Psoas muscle (tissue), 8 donors: ENCODE measurements at regions of chr11 and their contacts with region 1.

Region 1: GRCh38 chr11:73661035-73661628 is 14.8 kb downstream of the PLEKHB1 start:
- DNase-seq: peak; percentile 90 to 95
- ATAC-seq: peak; percentile 94 to 98 (median 97)
- H3K4me3 ChIP-seq: peak overlapping the region; percentile 59
- H3K27ac ChIP-seq: no peak overlapping the region
- H3K4me1 ChIP-seq: peaks cover 17% of the 10 kb centered on the region
- H3K27me3 ChIP-seq: no peaks in the 10 kb centered on the region
- CTCF ChIP-seq: peak; percentile 99

Region 2: DNA sequence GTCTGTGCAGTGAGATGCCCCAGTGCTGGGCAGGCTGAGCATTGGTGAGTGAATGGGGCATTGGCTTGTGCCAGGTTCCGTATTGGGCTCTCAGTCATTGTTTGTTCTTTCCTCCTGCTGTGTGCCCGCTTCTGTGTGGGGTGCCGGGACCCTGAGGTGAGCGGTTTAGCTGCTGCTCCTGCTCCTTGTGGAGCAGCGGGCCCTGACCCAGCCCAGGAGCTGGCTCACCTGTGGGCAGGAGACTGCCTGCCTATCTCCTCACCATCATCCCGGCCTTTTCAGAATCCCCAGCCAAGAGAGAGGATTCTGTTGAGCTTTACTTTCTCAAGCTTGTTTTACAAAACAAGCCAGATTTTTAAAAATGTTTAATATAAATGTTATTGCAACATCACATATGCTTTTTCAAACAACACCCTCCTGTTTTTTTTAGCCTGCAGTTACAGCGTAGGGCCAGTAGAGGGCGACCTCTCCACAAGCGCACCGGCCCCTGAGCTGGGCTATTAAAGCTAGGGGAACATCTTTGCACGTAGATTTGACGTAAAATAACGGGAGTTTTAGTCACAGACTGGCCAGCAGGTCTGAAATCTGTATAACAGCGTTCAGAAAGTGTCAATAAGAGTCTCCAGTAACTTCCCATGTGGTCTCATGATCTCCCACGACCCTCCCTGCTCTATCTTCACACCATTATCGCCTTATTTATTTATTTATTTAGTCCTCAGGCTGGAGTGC is 310.1 kb before region 1 on chr11:
- intact Hi-C with region 1: loop called in 1 of 2 experiments (anchors 2 kb)
- DNase-seq: no peak
- ATAC-seq: peak; percentile 56 to 86 (median 75)
- H3K4me3 ChIP-seq: no peak overlapping the region
- H3K27ac ChIP-seq: no peak overlapping the region
- H3K4me1 ChIP-seq: peaks cover 4% of the 10 kb centered on the region
- H3K27me3 ChIP-seq: no peaks in the 10 kb centered on the region
- CTCF ChIP-seq: peak; percentile 99

Region 3: GRCh38 chr11:73404048-73404447 is 257.1 kb before region 1 on chr11:
- intact Hi-C with region 1: loop called (anchors 2 to 5 kb)
- DNase-seq: peak; percentile 65 to 81
- ATAC-seq: peak; percentile 78 to 83 (median 82)
- H3K4me3 ChIP-seq: no peak overlapping the region
- H3K27ac ChIP-seq: peak overlapping the region; percentile 13
- H3K4me1 ChIP-seq: peaks cover 6% of the 10 kb centered on the region
- H3K27me3 ChIP-seq: no peaks in the 10 kb centered on the region
- CTCF ChIP-seq: peak; percentile 70

Region 4: DNA sequence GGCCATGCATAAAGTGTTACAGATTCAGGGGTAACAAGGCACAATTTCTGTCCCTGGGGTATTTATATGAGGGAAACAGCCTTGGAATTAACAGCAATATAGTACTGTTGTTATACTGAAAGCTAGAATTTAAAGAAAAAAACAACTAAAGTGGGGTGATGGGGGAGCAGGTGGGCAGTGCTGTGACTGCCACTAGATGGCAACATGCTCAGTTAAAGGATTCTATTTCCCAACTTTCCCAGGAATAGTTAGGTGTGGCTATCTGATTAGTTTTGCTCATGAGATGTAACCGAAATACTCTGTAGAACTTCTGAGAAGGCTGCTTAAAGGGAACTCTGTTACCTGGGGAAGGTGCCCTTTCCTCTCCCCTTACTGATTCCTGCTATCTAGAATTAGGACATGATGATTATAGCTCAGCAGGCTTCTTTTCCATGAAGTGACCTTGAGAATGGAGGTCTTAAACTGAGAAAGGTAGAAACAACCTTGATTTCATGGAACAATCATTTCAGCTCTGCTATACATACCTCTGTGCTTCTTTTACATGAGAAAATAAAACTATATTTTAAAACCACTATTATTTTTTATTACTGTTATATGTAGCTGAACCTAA is 182.3 kb before region 1 on chr11:
- intact Hi-C with region 1: loop called in 1 of 2 experiments (anchors 5 kb)
- DNase-seq: no peak
- ATAC-seq: peak in 3 of 4 donors; percentile 74 to 86 (median 84)
- H3K4me3 ChIP-seq: no peak overlapping the region
- H3K27ac ChIP-seq: no peak overlapping the region
- H3K4me1 ChIP-seq: peaks cover 18% of the 10 kb centered on the region
- H3K27me3 ChIP-seq: no peaks in the 10 kb centered on the region
- CTCF ChIP-seq: peak; percentile 52

Region 5: DNA sequence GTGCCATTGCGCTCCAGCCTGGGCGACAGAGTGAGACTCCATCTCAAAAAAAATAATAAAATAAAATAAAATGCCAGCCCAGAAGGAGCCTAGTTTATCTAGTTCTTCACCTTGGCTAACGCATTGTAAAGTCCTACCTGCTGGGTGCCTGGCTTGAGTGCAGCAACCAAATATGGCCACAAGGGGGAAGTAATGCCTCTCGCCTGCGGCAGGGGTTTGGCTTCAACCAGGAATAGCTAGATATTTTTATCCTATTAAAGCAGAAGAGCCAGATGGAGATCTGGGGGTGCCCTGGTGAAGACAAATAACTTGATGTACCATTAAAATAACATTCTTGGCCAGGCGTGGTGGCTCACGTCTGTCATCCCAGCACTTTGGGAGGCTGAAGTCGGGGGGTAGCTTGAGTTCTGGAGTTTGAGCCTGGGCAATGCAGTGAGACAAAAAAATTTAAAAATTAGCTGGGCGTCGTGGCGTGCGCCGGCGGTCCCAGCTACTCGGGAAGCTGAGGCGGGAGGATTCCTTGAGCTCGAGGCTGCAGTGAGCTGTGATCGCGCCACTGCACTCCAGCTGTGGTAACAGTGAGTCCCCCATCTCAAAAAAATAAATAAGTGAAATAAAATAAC is 35.3 kb before region 1 on chr11:
- intact Hi-C with region 1: loop called (anchors 1 to 2 kb)
- DNase-seq: peak; percentile 57 to 77
- ATAC-seq: peak; percentile 72 to 86 (median 80)
- H3K4me3 ChIP-seq: peak overlapping the region; percentile 49
- H3K27ac ChIP-seq: no peak overlapping the region
- H3K4me1 ChIP-seq: peaks cover 9% of the 10 kb centered on the region
- H3K27me3 ChIP-seq: no peaks in the 10 kb centered on the region
- CTCF ChIP-seq: peak; percentile 93